Activated B cell treated with CpG ODN at 0.5 μM for 24 hours (primary cell): ENCODE measurements at regions of chr6 and their contacts with region 1.

Region 1: DNA sequence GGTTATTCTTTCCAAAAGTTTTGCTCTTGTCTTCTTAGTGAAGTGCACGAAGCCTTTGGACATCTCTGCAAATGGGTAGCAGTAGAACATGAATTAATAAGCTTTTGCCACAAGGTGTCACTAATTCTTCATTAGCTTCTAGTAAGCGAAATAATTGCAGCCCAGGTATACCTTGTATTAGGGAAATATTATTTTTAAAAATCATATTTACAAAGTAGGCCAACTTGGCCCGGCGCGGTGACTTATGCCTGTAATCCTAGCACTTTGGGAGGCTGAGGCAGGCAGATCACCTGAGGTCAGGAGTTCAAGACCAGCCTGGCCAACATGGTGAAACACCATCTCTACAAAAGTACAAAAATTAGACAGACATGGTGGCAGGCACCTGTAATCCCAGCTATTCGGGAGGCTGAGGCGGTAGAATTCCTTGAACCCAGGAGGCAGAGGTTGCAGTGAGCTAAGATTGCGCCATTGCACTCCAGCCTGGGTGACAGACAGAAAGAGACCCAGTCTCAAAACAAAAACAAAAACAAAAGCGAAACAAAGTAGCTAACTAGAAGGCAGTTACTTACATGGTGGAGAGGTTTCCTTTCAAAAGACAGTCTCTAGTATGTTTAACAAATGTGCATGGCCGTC is 8.8 kb upstream of the RSPH3 start:
- DNase-seq: no peak
- ATAC-seq: peak; percentile 74
- H3K4me3 Mint-ChIP-seq: peak overlapping the region; percentile 5
- H3K27ac Mint-ChIP-seq: peak overlapping the region; percentile 24
- H3K4me1 Mint-ChIP-seq: peaks cover 41% of the 10 kb centered on the region
- H3K27me3 Mint-ChIP-seq: no peaks in the 10 kb centered on the region
- CTCF ChIP-seq: no peak

Region 2: DNA sequence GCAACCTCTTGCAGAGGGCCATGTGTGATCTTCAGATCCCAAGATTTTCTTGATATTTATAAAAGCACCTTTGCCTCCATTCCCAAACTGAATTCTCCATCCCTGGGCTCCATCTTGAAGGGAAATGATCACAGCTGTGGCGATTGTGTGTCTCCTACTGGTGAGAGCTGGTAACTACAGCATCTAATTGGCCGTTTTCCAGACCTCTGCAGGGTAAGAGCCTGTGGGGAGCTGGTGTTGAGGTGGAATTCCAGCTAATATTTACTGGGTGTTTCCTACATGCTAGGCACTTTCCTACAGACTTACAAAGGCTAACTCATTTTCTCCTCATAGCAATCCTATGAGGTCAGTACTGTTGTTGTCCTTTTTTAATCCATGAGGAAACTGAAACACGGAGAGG is 101.2 kb after region 1 on chr6:
- CTCF ChIA-PET with region 1: interaction called, 205 read pairs
- POLR2A ChIA-PET with region 1: interaction called, 123 read pairs
- intact Hi-C with region 1: loop called (anchors 1 kb)
- DNase-seq: no peak
- ATAC-seq: no peak
- H3K4me3 Mint-ChIP-seq: no peak overlapping the region
- H3K27ac Mint-ChIP-seq: peak overlapping the region; percentile 73
- H3K4me1 Mint-ChIP-seq: peaks cover 87% of the 10 kb centered on the region
- H3K27me3 Mint-ChIP-seq: no peaks in the 10 kb centered on the region
- CTCF ChIP-seq: peak; percentile 29

Region 3: GRCh38 chr6:159125014-159125609 is 116.3 kb after region 1 on chr6:
- CTCF ChIA-PET with region 1: interaction called, 409 read pairs
- POLR2A ChIA-PET with region 1: interaction called, 22 read pairs
- intact Hi-C with region 1: no loop called
- DNase-seq: no peak
- ATAC-seq: no peak
- H3K4me3 Mint-ChIP-seq: no peak overlapping the region
- H3K27ac Mint-ChIP-seq: no peak overlapping the region
- H3K4me1 Mint-ChIP-seq: peaks cover 69% of the 10 kb centered on the region
- H3K27me3 Mint-ChIP-seq: no peaks in the 10 kb centered on the region
- CTCF ChIP-seq: no peak

Region 4: DNA sequence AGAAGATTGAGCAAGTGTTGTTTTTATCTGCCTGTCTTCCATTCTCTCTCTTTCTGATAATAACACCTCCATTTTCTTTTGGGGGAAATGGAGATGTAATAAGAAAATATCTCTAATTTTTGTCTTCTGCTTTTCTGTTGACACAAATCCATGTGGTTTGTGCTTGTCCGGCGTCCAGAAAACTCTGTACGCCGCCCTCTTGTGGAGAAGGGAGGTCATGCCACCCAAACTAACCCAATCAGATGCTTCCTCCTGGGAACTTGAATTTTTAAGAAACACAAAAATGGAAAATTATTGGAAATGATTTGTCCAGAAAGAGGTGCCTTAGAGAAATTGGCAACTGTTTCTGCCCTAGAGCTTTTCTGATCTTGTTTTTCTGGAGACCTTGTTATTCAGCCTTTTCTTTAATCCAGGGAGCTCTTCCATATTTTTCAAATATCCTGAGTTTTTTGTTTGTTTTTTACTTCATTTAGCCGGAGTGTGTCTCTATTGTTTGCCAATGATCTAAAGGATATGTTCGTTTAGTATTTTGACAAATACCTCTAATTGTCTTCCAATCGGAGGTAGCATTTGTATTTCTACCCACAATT is 142.6 kb after region 1 on chr6:
- CTCF ChIA-PET with region 1: interaction called, 11 read pairs
- POLR2A ChIA-PET with region 1: no interaction called
- intact Hi-C with region 1: loop called (anchors 1 kb)
- DNase-seq: no peak
- ATAC-seq: peak; percentile 79
- H3K4me3 Mint-ChIP-seq: no peak overlapping the region
- H3K27ac Mint-ChIP-seq: no peak overlapping the region
- H3K4me1 Mint-ChIP-seq: peaks cover 4% of the 10 kb centered on the region
- H3K27me3 Mint-ChIP-seq: peaks cover 7% of the 10 kb centered on the region
- CTCF ChIP-seq: peak; percentile 47

Region 5: DNA sequence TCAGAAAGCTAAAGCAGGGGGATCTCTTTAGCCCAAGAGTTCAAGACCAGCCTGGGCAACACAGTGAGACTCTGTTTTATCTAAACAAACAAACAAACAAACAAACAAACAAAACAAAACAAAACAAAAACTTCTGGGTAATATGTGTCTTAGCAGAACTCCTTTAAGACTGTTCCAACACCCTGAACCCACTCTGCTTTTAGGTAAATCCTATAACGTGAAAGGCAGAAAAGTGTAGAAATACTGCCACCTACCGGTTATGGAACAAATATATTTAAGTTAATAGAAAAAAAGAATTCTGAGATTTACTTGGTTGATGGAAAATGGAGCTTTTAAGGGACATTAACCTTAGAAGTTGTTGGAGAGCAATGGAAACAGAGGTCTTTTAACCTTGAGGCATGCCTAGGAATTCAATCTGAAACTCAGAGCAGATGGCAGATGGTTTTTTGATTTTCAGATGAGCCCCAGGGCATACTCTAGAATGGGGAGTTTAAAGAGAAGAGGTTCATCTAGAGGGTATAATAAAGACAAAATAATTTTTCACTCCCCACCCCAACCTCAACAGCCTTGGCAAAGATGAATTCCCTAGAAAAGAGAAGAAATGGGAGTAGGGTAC is 645.8 kb after region 1 on chr6:
- CTCF ChIA-PET with region 1: interaction called, 3 read pairs
- POLR2A ChIA-PET with region 1: no interaction called
- intact Hi-C with region 1: loop called (anchors 5 kb)
- DNase-seq: no peak
- ATAC-seq: no peak
- H3K4me3 Mint-ChIP-seq: no peak overlapping the region
- H3K27ac Mint-ChIP-seq: no peak overlapping the region
- H3K4me1 Mint-ChIP-seq: no peaks in the 10 kb centered on the region
- H3K27me3 Mint-ChIP-seq: no peaks in the 10 kb centered on the region
- CTCF ChIP-seq: peak; percentile 74